CD4-positive, alpha-beta T cell (primary cell): ENCODE measurements at regions of chr2 and their contacts with region 1.

Region 1: GRCh38 chr2:241300000-241300399 is 15.5 kb downstream of the HDLBP start:
- DNase-seq: peak in 13 of 14 experiments; percentile 15 to 81 (median 48)
- ATAC-seq: peak; percentile 80
- H3K4me3 ChIP-seq: no peak overlapping the region
- H3K4me3 Mint-ChIP-seq: peak overlapping the region; percentile 44
- H3K27ac ChIP-seq: no peak overlapping the region
- H3K27ac Mint-ChIP-seq: peak overlapping the region; percentile 76
- H3K4me1 ChIP-seq: peaks cover 49% of the 10 kb centered on the region
- H3K4me1 Mint-ChIP-seq: peaks cover 77% of the 10 kb centered on the region
- H3K27me3 ChIP-seq: no peaks in the 10 kb centered on the region
- H3K27me3 Mint-ChIP-seq: no peaks in the 10 kb centered on the region
- CTCF ChIP-seq: peak; percentile 23

Region 2: DNA sequence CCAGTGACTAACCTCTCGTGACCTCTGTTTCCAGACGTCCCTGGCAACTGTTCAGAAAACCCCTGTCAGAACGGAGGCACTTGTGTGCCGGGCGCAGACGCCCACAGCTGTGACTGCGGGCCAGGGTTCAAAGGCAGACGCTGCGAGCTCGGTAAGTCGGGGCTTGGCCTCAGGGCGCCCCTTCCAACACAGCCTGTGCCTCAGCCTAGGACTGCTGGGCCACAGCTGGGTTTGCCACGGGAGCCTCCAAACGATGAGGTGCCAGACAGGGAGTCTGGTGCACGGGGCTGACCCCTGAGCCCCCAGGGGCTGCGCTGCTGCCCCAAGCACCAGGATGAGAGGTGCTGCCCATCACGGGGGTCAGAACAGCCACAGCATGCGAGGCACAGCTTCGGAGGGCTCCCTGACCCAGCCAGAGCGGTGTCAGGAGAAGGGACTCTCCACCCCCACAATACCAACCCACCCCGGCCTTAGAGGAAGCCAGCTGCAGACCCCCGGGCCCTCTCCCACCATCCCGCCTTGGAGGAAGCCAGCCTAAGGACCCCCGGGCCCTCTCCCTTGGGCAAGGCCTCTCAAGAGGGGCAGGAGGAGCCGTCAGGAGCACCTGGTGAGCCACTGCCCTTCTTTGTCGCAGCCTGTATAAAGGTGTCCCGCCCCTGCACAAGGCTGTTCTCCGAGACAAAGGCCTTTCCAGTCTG is 218.2 kb before region 1 on chr2:
- CTCF ChIA-PET with region 1: no interaction called
- POLR2A ChIA-PET with region 1: no interaction called
- intact Hi-C with region 1: loop called in 1 of 2 experiments (anchors 1 kb)
- DNase-seq: peak in 1 of 14 experiments; percentile 24
- ATAC-seq: no peak
- H3K4me3 ChIP-seq: no peak overlapping the region
- H3K4me3 Mint-ChIP-seq: no peak overlapping the region
- H3K27ac ChIP-seq: no peak overlapping the region
- H3K27ac Mint-ChIP-seq: peak overlapping the region; percentile 52
- H3K4me1 ChIP-seq: peaks cover 11% of the 10 kb centered on the region
- H3K4me1 Mint-ChIP-seq: peaks cover 6% of the 10 kb centered on the region
- H3K27me3 ChIP-seq: no peaks in the 10 kb centered on the region
- H3K27me3 Mint-ChIP-seq: no peaks in the 10 kb centered on the region
- CTCF ChIP-seq: no peak